Activated CD4-positive, alpha-beta T cell treated with anti-CD3 and anti-CD28 coated beads, Interleukin-2, amount 10 ng/mL, durations not matched to agents 7 days and 5 days (primary cell): ENCODE measurements at regions of chr6 and their contacts with region 1.

Region 1: GRCh38 chr6:44257025-44257752 is at the start of gene SLC35B2:
- DNase-seq: peak; percentile 63
- H3K4me3 Mint-ChIP-seq: peak within 1 kb of the TSS; percentile 84
- H3K27ac Mint-ChIP-seq: peak within 1 kb of the TSS; percentile 88
- H3K4me1 Mint-ChIP-seq: peaks cover 54% of the 10 kb centered on the region
- H3K27me3 Mint-ChIP-seq: no peaks in the 10 kb centered on the region
- total RNA-seq, gene SLC35B2: 29.5 to 30.1 TPM

Region 2: DNA sequence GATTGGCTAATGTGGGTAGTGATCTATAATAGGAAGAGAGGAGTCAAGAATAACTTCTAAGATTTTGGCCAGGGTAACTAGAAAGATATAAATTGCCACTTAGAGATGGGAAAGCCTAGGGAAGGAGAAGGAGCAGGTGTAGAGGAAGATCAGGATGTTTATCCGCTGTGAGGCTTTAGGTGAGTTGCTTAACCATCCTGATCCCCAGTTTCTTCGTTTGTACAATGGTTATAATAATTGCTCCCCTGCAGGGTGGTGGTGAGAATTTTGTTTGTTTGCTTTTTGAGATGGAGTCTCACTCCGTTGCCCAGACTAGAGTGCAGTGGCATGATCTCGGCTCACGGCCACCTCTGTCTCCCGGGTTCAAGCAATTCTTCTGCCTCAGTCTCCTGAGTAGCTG is 42.9 kb before region 1 on chr6:
- CTCF ChIA-PET with region 1: no interaction called
- POLR2A ChIA-PET with region 1: no interaction called
- DNase-seq: no peak
- H3K4me3 Mint-ChIP-seq: no peak overlapping the region
- H3K27ac Mint-ChIP-seq: no peak overlapping the region
- H3K4me1 Mint-ChIP-seq: peaks cover 6% of the 10 kb centered on the region
- H3K27me3 Mint-ChIP-seq: peaks cover 18% of the 10 kb centered on the region

Region 3: DNA sequence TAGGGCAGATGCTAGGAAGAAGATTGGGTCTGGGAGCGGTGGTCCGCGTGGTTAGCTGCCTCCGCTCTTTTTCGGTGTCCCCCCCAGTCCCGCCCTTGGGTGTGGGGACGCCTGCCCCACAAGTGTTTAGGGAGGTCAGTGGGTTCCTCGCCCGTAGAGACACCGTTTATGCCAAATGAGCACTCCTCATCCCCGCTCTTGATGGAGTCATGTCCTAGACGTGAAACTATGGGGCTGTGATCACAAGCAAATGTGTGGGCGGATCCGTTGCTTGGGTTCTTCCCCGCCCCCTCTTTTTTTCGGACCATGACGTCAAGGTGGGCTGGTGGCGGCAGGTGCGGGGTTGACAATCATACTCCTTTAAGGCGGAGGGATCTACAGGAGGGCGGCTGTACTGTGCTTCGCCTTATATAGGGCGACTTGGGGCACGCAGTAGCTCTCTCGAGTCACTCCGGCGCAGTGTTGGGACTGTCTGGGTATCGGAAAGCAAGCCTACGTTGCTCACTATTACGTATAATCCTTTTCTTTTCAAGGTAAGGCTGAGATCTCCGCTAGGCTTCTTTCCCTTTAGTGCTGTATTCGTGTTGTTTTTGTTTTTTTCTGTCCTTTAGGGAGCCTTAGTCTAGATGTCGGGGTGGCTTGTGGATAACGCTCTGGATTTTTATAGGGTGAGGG is 10.4 kb before region 1 on chr6 and contains the start of gene HSP90AB1:
- CTCF ChIA-PET with region 1: interaction called, 66 read pairs
- POLR2A ChIA-PET with region 1: interaction called, 15 read pairs
- DNase-seq: peak; percentile 97
- H3K4me3 Mint-ChIP-seq: peak within 1 kb of the TSS; percentile 99
- H3K27ac Mint-ChIP-seq: peak within 1 kb of the TSS; percentile 95
- H3K4me1 Mint-ChIP-seq: peaks cover 48% of the 10 kb centered on the region
- H3K27me3 Mint-ChIP-seq: no peaks in the 10 kb centered on the region
- total RNA-seq, gene HSP90AB1: 522 to 571 TPM